Ovary (tissue), 10 donors: ENCODE measurements at regions of chr18 and their contacts with region 1.

Region 1: DNA sequence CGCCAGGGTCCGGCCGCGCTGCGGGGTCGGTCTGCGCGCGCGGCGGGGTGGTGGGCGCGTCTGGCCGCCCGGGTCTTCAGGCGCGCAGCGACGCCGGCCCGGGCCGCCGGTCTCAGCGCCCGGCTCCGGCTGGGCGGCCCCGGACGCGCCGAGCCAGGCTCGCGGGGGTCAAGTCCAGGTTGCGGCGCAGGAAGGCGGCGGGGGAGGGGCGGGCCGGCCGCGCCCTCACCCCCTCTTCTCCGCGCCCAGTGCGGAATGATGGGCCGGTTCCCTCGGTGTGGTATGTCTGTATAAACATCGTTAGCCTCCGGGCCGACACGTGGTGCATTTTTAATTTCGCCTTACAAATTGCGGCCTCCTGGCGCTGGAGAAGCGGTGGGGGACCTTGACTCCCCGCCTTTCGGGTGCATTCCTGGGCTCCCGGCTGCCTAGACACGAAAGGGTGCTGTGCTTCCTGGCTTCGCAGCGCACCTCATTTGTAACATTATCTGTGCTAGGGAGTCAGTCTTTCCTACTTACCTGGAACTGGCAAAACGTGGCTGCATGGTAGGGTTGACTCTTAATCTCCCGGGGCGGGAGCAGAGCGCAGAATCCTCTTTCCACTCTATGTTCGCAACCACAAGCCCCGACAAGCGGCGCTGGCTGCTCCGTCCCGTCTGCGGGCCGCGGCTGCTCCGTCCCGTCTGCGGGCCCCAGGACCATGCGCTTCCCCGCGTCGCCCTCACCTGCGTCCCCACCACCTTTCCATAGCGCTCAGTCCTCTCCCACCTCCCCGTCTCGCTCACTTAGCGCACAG is 69.0 kb downstream of the CTAGE1 start:
- DNase-seq: peak; percentile 80 to 92 (median 85)
- H3K4me3 ChIP-seq: peak overlapping the region; percentile 66
- H3K27ac ChIP-seq: peak overlapping the region; percentile 75 to 89
- H3K4me1 ChIP-seq: peaks cover 12% of the 10 kb centered on the region
- H3K27me3 ChIP-seq: no peaks in the 10 kb centered on the region
- CTCF ChIP-seq: peak in 1 of 3 donors; percentile 1
- EP300 ChIP-seq: no peak
- POLR2A ChIP-seq: peak; percentile 4

Region 2: GRCh38 chr18:22194151-22194598 is 154.5 kb before region 1 on chr18:
- intact Hi-C with region 1: loop called in 3 of 4 experiments (anchors 2 to 5 kb)
- DNase-seq: peak in 3 of 5 donors; percentile 52 to 65 (median 59)
- H3K4me3 ChIP-seq: peak overlapping the region; percentile 10
- H3K27ac ChIP-seq: peak overlapping the region; percentile 22 to 70
- H3K4me1 ChIP-seq: peaks cover 14% of the 10 kb centered on the region
- H3K27me3 ChIP-seq: no peaks in the 10 kb centered on the region
- CTCF ChIP-seq: no peak
- EP300 ChIP-seq: no peak
- POLR2A ChIP-seq: no peak

Region 3: GRCh38 chr18:22214731-22215528 is 133.8 kb before region 1 on chr18:
- intact Hi-C with region 1: loop called in 1 of 4 experiments (anchors 10 kb)
- DNase-seq: no peak
- H3K4me3 ChIP-seq: no peak overlapping the region
- H3K27ac ChIP-seq: no peak overlapping the region
- H3K4me1 ChIP-seq: peaks cover 7% of the 10 kb centered on the region
- H3K27me3 ChIP-seq: no peaks in the 10 kb centered on the region
- CTCF ChIP-seq: no peak
- EP300 ChIP-seq: no peak
- POLR2A ChIP-seq: no peak

Region 4: GRCh38 chr18:22332590-22332989 is 16.1 kb before region 1 on chr18:
- intact Hi-C with region 1: no loop called
- DNase-seq: no peak
- H3K4me3 ChIP-seq: no peak overlapping the region
- H3K27ac ChIP-seq: no peak overlapping the region
- H3K4me1 ChIP-seq: peaks cover under 1% of the 10 kb centered on the region
- H3K27me3 ChIP-seq: no peaks in the 10 kb centered on the region
- CTCF ChIP-seq: no peak
- EP300 ChIP-seq: no peak
- POLR2A ChIP-seq: no peak

Region 5: DNA sequence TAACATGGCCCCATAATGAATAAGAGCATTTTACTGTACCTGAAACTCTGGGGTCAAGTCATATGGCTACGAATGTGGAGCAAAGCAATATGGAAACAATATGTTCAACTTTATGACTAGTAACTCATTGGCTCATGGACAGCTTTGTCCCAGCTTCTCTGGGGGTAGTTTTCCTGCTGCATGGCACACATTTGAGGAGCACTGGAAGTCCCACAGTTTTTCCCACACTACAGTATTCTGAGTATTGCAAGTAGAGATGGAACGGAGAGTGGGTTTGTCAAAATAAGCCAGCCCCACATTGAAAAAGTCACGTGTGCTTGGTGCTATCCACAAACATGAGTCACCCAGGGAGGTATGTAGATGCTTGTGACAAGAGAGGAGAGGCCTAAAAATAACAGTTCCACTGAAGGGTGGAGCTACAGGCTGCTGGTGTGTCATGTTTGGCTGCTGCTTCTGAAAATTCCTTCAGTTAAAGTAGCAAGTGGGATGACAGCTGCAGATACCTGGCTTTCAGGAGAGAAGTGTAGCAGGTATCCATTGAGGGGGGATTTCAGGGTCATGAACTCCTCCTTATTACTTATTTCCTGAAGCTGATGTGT is 117.2 kb after region 1 on chr18:
- intact Hi-C with region 1: loop called in 1 of 4 experiments (anchors 10 kb)
- DNase-seq: peak in 2 of 5 donors; percentile 35 to 56
- H3K4me3 ChIP-seq: no peak overlapping the region
- H3K27ac ChIP-seq: peak overlapping the region in 1 of 2 donors; percentile 3
- H3K4me1 ChIP-seq: peaks cover 24% of the 10 kb centered on the region
- H3K27me3 ChIP-seq: no peaks in the 10 kb centered on the region
- CTCF ChIP-seq: no peak
- EP300 ChIP-seq: no peak
- POLR2A ChIP-seq: no peak